ENCODE measurements at regions of chr20 and their contacts with region 1.

Region 1: DNA sequence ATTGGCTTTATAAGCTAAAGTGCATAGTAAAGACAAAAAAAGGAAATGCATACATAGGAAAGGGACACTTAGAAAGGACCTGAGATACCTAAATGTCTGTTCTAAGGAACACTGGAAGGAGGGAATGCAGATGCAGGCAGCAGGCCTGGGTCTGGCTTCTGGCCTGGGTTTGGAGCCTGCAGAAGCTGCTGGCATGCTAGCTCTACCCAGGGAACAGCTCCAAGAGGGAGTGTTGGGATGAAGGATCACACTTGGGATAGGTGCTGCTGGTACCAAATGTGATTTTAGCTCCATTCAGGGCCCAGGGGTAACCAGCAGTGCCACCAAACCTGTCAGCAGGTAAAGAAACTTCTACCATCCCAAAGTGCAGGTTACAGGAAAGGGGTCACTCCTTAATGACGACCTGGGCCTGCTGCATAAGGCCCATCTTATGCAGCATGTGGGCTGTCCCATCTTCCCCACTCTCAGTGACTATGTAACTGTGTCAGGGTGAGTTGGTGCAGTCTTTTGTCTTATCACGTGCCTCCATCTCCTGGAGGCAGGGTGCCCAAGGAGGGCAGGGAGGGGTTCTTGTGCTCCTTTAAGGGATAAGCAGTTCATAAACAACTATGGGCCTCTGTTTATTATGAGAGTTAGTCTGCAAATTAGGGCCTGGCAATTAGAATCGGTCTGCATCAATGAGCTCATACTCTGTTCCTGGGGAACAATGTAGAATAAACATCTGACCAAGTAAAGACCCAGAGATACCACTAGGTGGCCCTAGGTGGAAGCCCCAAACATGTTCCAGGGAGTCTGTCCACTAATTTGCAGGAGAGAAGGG is 26.9 kb downstream of the DDX27 start:
- DNase-seq: peak; percentile 63

Region 2: DNA sequence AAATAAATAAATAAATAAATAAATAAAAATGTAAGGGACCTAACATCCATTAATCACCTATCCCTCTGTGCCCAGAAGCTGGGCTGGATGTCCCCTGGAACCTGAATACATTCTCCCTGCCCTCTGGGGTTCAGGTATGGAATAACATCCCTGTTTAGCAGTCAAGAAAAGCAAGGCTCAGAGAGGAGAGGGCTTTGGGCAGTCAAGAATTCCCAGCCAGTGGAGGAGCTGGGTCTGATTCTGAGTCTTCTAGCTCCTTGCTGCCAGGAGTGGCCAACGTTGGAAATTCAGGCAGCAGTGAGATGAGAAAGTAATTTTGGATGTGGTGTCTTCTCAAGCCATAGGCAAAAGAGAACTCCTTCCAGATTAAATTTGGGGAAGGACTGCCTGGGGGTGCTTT is 74.3 kb after region 1 on chr20:
- CTCF ChIA-PET with region 1: interaction called, 13 read pairs
- POLR2A ChIA-PET with region 1: no interaction called
- DNase-seq: peak; percentile 68